Activated CD4-positive, alpha-beta T cell treated with anti-CD3 and anti-CD28 coated beads for 36 hours (primary cell): ENCODE measurements at regions of chr4 and their contacts with region 1.

Region 1: DNA sequence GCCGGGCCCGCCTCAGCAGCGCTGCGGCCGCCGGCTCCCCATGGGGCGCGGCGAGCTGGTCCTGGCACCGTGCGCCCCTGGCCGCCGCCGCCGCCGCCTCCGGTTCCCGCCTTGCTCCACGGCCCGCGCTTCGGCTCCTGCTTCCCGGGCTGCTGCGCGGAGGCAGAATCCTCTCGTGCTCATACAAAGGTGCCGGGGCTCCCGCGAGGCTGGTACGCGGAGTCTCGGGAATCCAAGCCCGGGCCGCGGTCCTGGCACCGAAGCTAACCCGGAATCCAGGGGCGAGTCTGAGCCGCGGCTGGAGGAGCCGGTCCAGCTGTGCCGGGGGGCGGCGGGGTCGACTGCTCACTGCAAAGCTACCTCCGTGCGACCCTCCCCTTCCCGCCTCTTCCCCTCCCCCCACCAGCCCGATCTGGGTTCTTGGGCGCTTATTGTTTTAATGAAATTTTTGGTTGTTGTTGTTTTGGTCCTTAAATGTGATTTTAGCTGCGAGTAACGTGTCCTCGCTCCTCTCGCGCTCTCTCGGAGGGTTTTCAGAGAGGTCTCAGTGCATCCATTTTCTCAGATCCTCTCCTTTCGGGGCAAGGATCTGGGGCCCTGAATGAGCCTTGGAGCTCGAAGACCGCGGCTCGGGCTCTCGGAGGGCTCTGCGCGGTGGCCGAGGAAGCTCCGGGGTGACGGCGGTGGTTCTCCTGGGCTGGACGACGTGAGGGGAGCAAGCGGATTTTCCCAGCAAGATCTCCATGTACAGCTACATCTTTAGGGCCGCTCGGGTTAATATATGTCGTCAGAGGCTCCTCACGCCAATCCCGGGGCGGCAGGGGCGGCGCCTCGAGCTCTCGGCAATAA is at the start of gene HAND2:
- DNase-seq: peak; percentile 44
- ATAC-seq: no peak
- H3K4me3 Mint-ChIP-seq: peak within 1 kb of the TSS; percentile 62
- H3K27ac Mint-ChIP-seq: no peak within 1 kb of the TSS
- H3K4me1 Mint-ChIP-seq: peaks cover 17% of the 10 kb centered on the region
- H3K27me3 Mint-ChIP-seq: peaks cover 79% of the 10 kb centered on the region
- total RNA-seq, gene HAND2: not detected

Region 2: DNA sequence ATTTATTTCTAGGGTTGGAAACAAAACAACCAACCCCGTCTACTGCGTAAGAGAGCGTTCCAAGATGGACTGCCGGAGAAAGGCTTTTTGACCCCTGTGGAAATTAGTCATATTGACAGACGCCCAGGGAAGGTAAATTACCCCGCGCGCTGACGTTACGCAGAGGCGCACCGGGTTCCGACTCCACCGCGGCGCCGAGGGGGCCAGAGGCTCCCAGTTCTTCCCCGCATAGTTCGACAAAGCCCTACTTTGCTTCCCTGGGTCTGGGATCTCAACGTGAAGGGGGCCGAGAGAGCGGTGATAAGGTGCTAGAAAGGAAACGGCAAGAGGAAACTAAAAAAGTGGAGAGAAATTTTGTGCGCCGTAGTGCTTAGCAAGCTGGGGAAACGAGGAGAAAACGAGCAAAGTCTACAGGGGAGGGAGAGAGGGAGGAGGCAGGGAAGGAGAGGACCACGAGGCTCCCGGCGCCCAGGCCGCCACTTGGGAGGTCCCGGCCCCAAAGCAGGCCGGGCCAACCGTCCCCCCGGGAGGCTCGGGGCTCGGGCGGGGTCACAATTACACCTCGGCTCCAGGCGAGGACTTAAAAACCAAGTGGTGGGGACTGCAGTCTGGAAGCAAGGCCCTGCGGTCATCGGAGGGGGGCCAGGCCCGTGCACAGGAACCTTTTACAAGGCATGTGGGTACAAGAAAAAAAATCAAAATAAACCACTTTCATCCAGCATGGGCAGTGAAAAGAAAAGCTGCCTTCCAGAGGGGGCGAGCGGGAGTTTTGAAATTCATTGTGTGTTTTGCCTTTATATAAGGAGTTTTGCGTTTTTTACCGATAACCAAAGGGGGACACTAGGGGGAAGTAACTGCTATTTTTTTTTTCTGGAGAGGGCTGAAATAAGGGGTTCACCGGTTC is 12.8 kb before region 1 on chr4:
- CTCF ChIA-PET with region 1: interaction called, 3 read pairs
- POLR2A ChIA-PET with region 1: no interaction called
- intact Hi-C with region 1: loop called (anchors 2 kb)
- DNase-seq: no peak
- ATAC-seq: no peak
- H3K4me3 Mint-ChIP-seq: no peak overlapping the region
- H3K27ac Mint-ChIP-seq: no peak overlapping the region
- H3K4me1 Mint-ChIP-seq: peaks cover 11% of the 10 kb centered on the region
- H3K27me3 Mint-ChIP-seq: peaks cover 83% of the 10 kb centered on the region